Mammary epithelial cell (primary cell): ENCODE measurements at regions of chr6 and their contacts with region 1.

Region 1: GRCh38 chr6:70107852-70108629 is 194.8 kb downstream of the COL9A1 start:
- DNase-seq: peak; percentile 8
- H3K4me3 ChIP-seq: no peak overlapping the region
- H3K27ac ChIP-seq: no peak overlapping the region
- H3K4me1 ChIP-seq: no peaks in the 10 kb centered on the region
- H3K27me3 ChIP-seq: no peaks in the 10 kb centered on the region
- CTCF ChIP-seq: peak; percentile 66 to 69

Region 2: DNA sequence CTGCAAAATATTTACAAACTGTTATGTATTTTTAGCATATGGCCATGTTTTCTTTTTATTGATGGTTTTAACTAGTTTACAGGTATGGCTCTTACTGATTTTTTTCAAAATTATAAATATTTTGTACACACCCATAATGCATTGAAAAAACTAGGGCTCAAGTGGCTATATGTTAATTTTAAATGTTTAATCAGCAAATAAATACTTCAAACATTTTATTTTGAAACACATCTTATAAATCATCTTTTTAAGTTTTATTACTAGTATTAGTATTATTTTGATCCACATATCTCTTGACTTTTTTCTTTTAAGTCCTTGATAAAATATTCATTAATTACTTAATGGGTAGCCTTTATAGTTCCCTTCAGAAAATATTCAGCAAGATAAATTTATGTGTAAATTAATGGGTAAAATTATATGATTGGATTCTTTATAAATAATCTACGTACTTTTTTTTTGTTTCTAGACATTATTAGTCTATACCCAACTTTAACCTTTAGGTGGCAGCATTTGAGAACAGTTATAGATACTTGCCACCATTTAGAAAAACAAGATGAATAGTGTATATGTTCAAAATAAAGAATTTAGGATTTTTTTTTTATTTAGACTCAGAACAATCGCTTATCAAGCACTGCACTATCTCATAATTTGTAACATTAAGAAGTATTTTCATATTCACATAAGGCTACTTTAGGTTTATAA is 1231.1 kb before region 1 on chr6:
- CTCF ChIA-PET with region 1: interaction called, 3 read pairs
- dilution Hi-C with region 1: no loop called
- in situ Hi-C with region 1: no loop called
- intact Hi-C with region 1: loop called (anchors 5 kb)
- DNase-seq: no peak
- H3K4me3 ChIP-seq: no peak overlapping the region
- H3K27ac ChIP-seq: no peak overlapping the region
- H3K4me1 ChIP-seq: no peaks in the 10 kb centered on the region
- H3K27me3 ChIP-seq: no peaks in the 10 kb centered on the region
- CTCF ChIP-seq: peak in 1 of 2 donors; percentile 50

Region 3: DNA sequence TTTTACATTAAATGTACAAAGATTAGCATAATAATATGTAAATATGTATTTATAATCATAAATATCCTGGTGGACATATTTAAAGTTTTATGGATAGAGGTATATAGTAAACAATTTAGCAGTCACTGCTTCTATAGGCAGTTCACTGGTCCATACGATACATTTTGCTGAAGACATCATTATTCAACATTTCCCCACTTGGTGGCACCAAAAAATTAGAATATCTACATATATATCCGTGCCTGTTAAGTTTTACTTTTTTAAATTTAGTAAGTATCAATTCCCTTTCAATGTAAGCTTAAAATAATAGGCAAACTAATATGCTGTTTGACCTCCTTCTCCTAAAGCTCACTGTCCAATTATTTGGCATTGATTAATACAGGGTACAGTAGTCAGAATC is 375.4 kb before region 1 on chr6:
- CTCF ChIA-PET with region 1: no interaction called
- dilution Hi-C with region 1: no loop called
- in situ Hi-C with region 1: no loop called
- intact Hi-C with region 1: loop called (anchors 5 kb)
- DNase-seq: no peak
- H3K4me3 ChIP-seq: no peak overlapping the region
- H3K27ac ChIP-seq: no peak overlapping the region
- H3K4me1 ChIP-seq: no peaks in the 10 kb centered on the region
- H3K27me3 ChIP-seq: no peaks in the 10 kb centered on the region
- CTCF ChIP-seq: peak in 1 of 2 donors; percentile 11

Region 4: DNA sequence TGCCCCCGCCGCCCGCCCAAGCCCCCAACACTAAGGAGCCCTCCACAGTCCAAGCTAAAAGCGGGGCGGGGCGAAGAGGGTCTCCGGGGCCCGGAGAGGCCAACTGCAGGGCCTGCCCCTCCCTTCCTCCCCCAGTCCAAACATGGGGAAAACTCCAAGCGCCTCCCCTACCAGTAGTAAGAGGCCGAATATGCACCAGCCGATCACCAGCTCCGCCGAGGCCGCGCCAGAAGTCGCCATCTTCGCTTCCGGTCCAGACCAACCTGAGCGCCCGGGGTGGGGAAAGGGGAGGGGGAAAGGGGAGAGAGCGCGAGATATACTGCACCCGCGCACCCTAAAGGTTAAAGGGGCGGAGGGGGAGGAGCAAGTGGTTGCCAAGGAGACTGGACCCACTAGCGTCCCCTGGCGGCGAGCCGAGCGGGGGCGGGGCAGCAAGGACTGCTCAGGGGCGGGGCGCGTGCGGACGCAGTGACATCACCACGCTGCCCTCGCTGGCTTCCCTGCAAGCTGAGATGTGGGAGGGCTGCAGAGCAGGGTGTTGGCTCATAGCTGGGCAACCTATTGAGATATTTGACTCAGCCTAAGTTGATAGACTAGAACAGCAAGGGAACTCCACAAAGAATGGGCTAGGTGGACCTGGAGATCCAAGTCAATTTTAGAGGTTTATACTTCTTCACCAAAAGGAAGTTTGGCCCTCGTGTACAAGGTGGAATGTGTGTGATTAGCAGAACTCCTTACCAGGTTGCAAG is 311.2 kb before region 1 on chr6 and contains the start of gene LMBRD1:
- CTCF ChIA-PET with region 1: no interaction called
- dilution Hi-C with region 1: no loop called
- in situ Hi-C with region 1: no loop called
- intact Hi-C with region 1: no loop called
- DNase-seq: peak; percentile 92
- H3K4me3 ChIP-seq: peak within 1 kb of the TSS; percentile 72 to 80 (median 80)
- H3K27ac ChIP-seq: peak within 1 kb of the TSS; percentile 93
- H3K4me1 ChIP-seq: peaks cover 14% of the 10 kb centered on the region
- H3K27me3 ChIP-seq: no peaks in the 10 kb centered on the region
- CTCF ChIP-seq: peak; percentile 62 to 89
- total RNA-seq, gene LMBRD1: 17.7 to 30.0 TPM

Region 5: DNA sequence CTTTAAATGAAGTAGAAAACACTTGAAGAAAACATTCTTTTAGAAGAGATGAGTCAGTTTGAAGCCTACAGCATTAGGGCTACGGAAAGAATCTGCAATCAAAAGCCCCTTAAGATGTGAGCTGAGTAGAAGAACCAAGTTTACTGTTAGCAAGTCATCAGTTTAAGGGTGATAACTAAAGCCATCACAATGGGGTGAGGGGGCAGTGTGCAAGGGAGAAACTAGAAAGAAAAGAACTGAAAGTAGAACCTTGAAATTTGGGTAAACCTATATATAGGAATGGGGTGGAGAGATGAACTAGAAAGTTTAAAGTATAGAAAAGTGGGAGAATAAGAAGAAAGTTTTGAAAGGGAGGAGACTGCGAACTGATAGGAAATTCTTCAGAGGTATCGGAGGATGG is 28.8 kb before region 1 on chr6:
- CTCF ChIA-PET with region 1: no interaction called
- dilution Hi-C with region 1: no loop called
- in situ Hi-C with region 1: no loop called
- intact Hi-C with region 1: no loop called
- DNase-seq: no peak
- H3K4me3 ChIP-seq: no peak overlapping the region
- H3K27ac ChIP-seq: no peak overlapping the region
- H3K4me1 ChIP-seq: no peaks in the 10 kb centered on the region
- H3K27me3 ChIP-seq: peaks cover 2% of the 10 kb centered on the region
- CTCF ChIP-seq: no peak

Region 6: GRCh38 chr6:70142034-70142433 is 34.0 kb after region 1 on chr6:
- CTCF ChIA-PET with region 1: no interaction called
- dilution Hi-C with region 1: no loop called
- in situ Hi-C with region 1: no loop called
- intact Hi-C with region 1: no loop called
- DNase-seq: no peak
- H3K4me3 ChIP-seq: no peak overlapping the region
- H3K27ac ChIP-seq: no peak overlapping the region
- H3K4me1 ChIP-seq: no peaks in the 10 kb centered on the region
- H3K27me3 ChIP-seq: peaks cover 2% of the 10 kb centered on the region
- CTCF ChIP-seq: no peak

Region 7: DNA sequence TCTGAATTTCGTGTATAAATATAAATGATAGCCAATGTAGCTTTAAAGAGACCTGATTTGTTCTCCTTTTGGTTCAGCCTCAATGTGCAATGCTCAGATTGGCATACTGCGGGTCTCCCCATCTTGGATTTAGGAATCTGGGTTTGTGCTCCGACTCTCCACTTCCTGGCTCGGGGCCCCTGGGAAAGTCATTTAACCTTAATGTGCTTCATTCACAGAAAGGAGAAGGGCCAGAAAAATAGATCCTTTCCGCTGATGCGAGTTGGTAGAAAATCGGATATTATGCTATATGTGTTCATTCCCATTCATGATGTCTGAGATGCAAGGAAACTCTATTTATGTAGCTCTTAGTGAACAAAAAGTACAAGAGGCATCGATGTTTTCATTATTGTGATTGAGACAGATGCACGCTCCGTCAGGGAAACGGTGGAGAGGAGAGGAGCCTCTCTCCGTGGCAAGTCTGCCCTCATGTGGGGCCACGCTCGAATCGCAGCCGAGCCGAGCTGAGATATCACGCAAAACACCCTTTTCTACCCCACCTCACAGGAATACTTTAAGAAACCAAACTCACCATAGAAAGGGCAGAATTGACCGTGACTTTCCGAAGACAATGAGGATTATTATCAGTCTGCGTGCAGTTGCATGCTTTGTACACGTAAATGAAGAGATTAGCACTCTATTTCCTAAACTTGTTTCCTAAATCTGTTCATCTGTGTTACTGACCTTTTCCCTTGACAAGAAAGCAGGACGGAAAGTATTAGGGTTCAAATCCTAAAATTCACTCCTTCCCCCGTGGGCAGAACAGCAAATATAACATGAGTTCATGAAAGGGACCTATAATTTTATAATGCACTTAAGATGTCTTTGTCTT is 58.3 kb after region 1 on chr6:
- CTCF ChIA-PET with region 1: interaction called, 3 read pairs
- dilution Hi-C with region 1: no loop called
- in situ Hi-C with region 1: no loop called
- intact Hi-C with region 1: loop called (anchors 2 kb)
- DNase-seq: peak; percentile 29
- H3K4me3 ChIP-seq: no peak overlapping the region
- H3K27ac ChIP-seq: no peak overlapping the region
- H3K4me1 ChIP-seq: no peaks in the 10 kb centered on the region
- H3K27me3 ChIP-seq: peaks cover 2% of the 10 kb centered on the region
- CTCF ChIP-seq: peak; percentile 67 to 76

Region 8: DNA sequence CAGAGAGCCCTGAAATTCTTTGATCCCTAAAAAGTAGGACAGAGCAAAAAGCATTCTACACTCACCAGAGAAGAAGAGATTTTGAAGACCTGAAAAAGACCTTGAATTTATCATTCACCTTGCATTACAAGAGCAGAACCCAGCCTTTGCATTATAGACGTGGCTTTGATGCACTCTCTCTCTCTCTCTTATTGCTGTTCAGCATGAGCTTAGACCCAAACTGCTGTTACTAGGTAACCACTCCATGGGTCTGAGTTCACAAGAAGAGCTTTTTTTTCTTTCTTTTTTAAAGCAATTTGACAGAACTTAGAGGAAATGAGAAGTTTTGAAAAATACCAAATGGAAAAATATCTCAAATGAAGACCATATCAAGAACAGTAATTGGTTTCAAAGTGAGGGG is 150.4 kb after region 1 on chr6:
- CTCF ChIA-PET with region 1: no interaction called
- dilution Hi-C with region 1: no loop called
- in situ Hi-C with region 1: no loop called
- intact Hi-C with region 1: no loop called
- DNase-seq: no peak
- H3K4me3 ChIP-seq: no peak overlapping the region
- H3K27ac ChIP-seq: no peak overlapping the region
- H3K4me1 ChIP-seq: no peaks in the 10 kb centered on the region
- H3K27me3 ChIP-seq: peaks cover 8% of the 10 kb centered on the region
- CTCF ChIP-seq: no peak